HCT116 (cell line): ENCODE measurements at regions of chr3 and their contacts with region 1.

Region 1: DNA sequence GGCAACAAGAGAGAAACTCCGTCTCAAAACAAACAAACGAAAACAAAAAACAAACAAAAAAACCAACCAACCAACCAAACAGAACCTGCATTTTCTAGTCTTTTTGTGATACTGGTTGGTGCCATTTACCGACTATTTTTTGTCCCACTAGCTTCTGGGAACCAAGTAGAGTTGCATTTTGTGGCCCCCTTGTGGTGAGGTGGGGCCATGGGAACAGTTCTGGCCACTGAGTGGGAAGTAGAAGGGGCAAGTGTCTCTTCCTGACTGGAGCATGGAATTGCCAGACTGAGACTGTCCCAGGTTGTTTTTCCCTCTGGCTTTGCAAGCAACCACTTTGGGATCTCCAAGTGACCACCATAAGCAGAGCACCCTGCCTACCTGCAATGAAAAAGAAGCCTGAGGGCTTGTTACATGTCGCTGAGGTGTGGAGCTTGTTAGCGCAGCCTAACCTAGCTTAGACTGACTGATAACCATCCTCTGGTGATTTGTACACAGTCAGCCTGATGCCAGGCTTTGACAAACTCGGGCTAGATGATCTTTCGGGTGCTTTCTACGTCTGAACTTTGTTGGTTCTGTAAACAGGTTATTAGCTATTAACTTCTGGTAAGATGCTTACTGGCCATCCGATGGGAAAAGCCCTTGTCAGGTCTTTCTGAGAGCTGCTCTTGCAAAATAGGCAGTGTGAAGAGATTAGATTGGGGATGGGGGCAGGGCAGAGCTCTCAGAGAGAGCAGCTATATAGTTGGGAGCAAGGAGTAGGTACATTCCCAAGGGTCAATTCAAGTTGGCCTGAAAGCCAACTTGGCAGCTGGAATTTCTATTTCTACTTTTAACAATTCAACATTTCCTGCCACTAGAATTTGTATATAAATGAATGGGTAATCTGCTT is 172.2 kb downstream of the SSR3 start:
- DNase-seq: peak; percentile 23
- ATAC-seq: peak; percentile 94
- H3K4me3 ChIP-seq: no peak overlapping the region
- H3K27ac ChIP-seq: no peak overlapping the region
- H3K4me1 ChIP-seq: no peaks in the 10 kb centered on the region
- H3K27me3 ChIP-seq: 0 out of 2 replicates have a peak, but pooled peaks cover 2% of the 10 kb centered on the region
- CTCF ChIP-seq: peak; percentile 62 to 87 (median 81); a peak in 5 of 6 replicates
- POLR2A ChIP-seq: no peak
- RAD21 ChIP-seq: peak; percentile 81

Region 2: DNA sequence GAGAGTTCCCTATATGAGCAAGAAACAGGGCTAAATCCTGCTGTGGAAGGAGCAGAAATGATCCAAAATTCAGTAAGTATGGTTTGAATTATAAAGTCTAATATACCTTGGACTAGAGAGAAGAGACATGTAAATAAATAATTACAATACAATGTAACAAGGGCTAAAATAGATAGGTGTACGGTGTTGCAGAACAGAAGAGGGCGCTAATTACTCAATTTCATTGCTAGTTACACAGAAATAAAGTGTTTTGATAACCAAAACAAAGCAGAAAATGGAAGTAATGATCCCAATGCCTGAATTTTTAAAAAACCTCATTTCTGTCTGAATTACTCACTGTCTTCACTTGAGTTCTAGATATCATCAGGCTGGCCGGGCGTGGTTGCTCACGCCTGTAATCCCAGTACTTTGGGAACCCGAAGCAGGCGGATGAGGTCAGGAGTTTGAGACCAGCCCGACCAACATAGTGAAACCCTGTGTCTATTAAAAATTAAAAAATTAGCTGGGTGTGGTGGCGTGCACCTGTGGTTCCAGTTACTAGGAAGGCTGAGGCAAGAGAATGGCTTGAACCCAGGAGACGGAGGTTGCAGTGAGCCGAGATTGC is 629.6 kb before region 1 on chr3:
- CTCF ChIA-PET with region 1: no interaction called
- POLR2A ChIA-PET with region 1: no interaction called
- RAD21 ChIA-PET with region 1: no interaction called
- intact Hi-C with region 1: no loop called
- DNase-seq: no peak
- ATAC-seq: peak; percentile 81
- H3K4me3 ChIP-seq: no peak overlapping the region
- H3K27ac ChIP-seq: no peak overlapping the region
- H3K4me1 ChIP-seq: peaks cover 0 to 8% of the 10 kb centered on the region in 2 experiments; a peak in 3 of 4 replicates
- H3K27me3 ChIP-seq: no peaks in the 10 kb centered on the region
- CTCF ChIP-seq: peak; percentile 47 to 74 (median 74); a peak in 5 of 6 replicates
- POLR2A ChIP-seq: no peak
- RAD21 ChIP-seq: peak; percentile 79

Region 3: DNA sequence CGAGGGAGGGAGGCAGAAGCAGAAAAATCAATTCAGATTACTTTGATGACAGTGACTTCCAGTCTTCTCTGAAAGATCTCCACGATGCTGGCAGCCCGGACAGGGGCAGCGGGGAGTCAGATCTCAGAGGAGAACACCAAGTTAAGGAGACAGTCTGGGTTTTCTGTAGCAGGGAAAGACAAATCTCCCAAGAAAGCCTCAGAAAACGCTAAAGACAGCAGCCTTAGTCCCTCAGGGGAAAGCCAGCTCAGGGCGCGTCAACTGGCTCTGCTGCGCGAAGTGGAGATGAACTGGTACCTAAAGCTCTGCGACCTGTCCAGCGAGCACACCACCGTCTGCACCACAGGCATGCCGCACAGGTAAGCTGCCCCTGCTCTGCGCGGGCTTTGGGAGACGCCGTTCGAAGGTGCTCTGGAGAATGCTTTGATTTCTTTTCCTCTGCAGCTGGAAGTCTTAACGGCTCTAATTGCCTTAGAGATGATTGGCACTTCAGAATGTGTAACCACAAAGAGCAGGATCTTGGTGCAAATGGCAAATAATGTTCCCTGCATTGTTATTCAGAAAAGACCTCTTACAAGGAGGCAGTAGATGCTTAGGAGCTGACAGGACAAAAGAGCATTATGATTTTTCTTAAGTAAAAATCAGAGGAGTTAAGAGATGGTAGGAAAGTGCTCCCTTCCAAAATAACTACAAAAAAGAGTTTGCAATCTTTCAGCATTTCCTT is 262.0 kb before region 1 on chr3 and contains the start of gene KCNAB1:
- CTCF ChIA-PET with region 1: no interaction called
- POLR2A ChIA-PET with region 1: no interaction called
- RAD21 ChIA-PET with region 1: no interaction called
- intact Hi-C with region 1: no loop called
- DNase-seq: no peak
- ATAC-seq: no peak
- H3K4me3 ChIP-seq: no peak within 1 kb of the TSS
- H3K27ac ChIP-seq: no peak within 1 kb of the TSS
- H3K4me1 ChIP-seq: no peaks in the 10 kb centered on the region
- H3K27me3 ChIP-seq: no peaks in the 10 kb centered on the region
- CTCF ChIP-seq: no peak
- POLR2A ChIP-seq: no peak
- RAD21 ChIP-seq: no peak
- total RNA-seq, gene KCNAB1: not detected

Region 4: DNA sequence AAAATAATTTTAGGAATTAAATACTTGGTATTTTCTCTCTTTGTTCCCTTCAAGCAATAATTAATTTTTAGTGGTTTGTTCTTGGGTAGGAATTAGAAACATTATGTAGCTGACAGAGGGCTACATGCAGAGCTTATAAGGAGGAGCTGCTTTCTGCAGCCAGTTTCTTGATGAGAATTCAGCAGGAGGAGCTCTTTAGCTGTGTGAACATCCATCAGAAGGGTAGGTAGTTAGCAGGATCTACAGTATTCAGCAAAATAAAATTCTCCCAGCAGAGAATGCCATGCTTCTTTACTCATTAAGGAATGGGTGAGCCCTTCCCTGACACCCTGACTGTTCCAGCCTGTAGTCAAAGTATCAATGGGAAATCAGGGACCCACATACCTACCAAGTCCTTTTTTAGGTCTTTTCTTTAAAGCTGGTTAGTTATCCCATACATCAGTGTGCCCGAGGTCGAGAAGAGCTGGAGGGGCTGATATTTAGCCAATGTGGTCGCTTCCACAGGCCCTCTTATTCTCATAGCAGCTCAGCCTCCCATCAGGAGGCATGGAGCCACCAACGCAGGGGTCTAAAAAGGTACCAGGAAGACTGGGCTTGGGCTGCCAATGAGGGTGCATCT is 208.4 kb before region 1 on chr3:
- CTCF ChIA-PET with region 1: interaction called, 32 read pairs
- POLR2A ChIA-PET with region 1: interaction called, 3 read pairs
- RAD21 ChIA-PET with region 1: interaction called, 8 to 9 read pairs
- intact Hi-C with region 1: loop called (anchors 1 kb)
- DNase-seq: peak; percentile 16
- ATAC-seq: peak; percentile 59; the same call in 1 of the 2 replicates
- H3K4me3 ChIP-seq: no peak overlapping the region
- H3K27ac ChIP-seq: no peak overlapping the region
- H3K4me1 ChIP-seq: no peaks in the 10 kb centered on the region; a peak in 1 of 4 replicates
- H3K27me3 ChIP-seq: no peaks in the 10 kb centered on the region
- CTCF ChIP-seq: peak; percentile 15 to 53 (median 29); a peak in 4 of 6 replicates
- POLR2A ChIP-seq: no peak
- RAD21 ChIP-seq: peak; percentile 72

Region 5: DNA sequence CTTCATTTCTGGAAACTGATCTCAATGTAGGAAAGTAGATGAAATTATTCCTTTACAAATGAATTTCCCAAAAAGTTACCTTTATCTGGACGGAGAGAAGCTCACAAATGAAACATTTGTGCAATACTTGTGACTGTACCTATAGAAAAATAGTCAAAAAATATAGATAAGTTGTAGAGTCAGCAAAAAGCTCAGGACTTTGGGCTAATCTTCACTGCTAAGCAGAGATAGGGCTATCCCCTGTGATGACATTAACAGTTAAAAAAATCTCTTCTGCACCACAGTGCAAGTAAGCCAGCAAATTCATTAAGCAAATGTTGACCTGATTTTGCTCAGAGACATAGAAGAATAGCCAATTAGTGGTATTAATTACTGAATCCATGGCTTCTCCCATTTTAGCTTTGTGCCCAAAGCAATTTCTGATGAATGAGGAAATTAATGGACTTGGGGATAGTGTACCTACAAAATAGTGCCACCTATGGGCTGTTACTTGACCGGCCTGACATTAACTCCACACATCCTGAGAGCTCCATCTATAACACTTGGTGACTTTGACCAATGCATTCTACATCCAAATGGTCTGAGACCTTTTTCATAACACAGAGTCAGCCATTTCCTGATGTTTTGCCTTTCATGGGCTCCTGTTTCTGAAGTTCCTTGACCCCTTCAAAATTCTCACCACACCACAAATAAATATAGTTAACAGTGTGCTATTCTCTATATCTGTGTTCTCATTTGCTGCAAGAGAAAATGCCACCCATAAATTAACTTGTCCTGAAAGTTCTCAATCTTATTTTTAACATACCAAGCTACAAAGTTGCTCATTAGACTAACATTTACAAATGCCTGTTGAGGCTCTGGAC is 67.2 kb after region 1 on chr3:
- CTCF ChIA-PET with region 1: interaction called, 10 read pairs
- POLR2A ChIA-PET with region 1: no interaction called
- RAD21 ChIA-PET with region 1: no interaction called
- intact Hi-C with region 1: no loop called
- DNase-seq: peak; percentile 37
- ATAC-seq: peak; percentile 91
- H3K4me3 ChIP-seq: no peak overlapping the region
- H3K27ac ChIP-seq: no peak overlapping the region
- H3K4me1 ChIP-seq: no peaks in the 10 kb centered on the region
- H3K27me3 ChIP-seq: no peaks in the 10 kb centered on the region
- CTCF ChIP-seq: peak; percentile 47 to 74 (median 68); a peak in 5 of 6 replicates
- POLR2A ChIP-seq: no peak
- RAD21 ChIP-seq: peak; percentile 61

Region 6: GRCh38 chr3:157136647-157137387 is 754.1 kb after region 1 on chr3:
- CTCF ChIA-PET with region 1: no interaction called
- POLR2A ChIA-PET with region 1: no interaction called
- RAD21 ChIA-PET with region 1: no interaction called
- intact Hi-C with region 1: loop called (anchors 2 kb)
- DNase-seq: no peak
- ATAC-seq: peak; percentile 42
- H3K4me3 ChIP-seq: no peak overlapping the region
- H3K27ac ChIP-seq: no peak overlapping the region
- H3K4me1 ChIP-seq: peaks cover 3 to 43% of the 10 kb centered on the region in 2 experiments
- H3K27me3 ChIP-seq: no peaks in the 10 kb centered on the region
- CTCF ChIP-seq: no peak
- POLR2A ChIP-seq: no peak
- RAD21 ChIP-seq: no peak